ENCODE measurements at regions of chr12 and their contacts with region 1.

Region 1: GRCh38 chr12:111298582-111299436 is 70.1 kb downstream of the PHETA1 start:
- DNase-seq: peak; percentile 48 to 82
- H3K4me3 ChIP-seq: no peak overlapping the region
- H3K4me1 ChIP-seq: no peaks in the 10 kb centered on the region
- H3K27me3 ChIP-seq: no peaks in the 10 kb centered on the region

Region 2: DNA sequence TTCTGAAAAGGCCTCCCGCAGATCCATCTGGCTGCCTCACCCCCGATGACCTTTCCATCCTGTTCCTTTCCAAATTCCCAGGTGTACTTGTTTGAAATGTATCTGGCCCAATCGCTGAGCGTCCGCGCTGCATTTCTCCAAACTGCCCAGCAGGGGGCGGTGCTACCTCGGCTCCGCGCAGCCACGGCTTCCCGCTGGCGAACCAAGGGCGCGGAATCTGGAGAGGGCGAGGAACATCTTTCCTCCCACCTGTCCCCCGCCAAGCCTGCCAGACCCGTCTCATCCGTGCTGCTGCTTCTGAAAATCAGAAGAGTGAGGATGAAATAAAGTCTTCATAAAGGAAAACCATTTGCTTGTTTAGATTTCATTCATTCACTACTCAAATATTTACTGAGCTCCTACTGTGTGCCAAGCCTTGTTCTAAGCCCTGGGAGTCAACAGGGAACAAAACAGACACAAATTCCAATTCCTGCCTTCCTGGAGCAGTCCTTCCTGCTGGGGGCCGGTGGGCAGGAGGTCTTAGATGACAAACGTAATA is 361.6 kb before region 1 on chr12:
- in situ Hi-C with region 1: loop called (anchors 10 kb)
- DNase-seq: peak; percentile 50 to 80
- H3K4me3 ChIP-seq: no peak overlapping the region
- H3K4me1 ChIP-seq: no peaks in the 10 kb centered on the region
- H3K27me3 ChIP-seq: no peaks in the 10 kb centered on the region

Region 3: DNA sequence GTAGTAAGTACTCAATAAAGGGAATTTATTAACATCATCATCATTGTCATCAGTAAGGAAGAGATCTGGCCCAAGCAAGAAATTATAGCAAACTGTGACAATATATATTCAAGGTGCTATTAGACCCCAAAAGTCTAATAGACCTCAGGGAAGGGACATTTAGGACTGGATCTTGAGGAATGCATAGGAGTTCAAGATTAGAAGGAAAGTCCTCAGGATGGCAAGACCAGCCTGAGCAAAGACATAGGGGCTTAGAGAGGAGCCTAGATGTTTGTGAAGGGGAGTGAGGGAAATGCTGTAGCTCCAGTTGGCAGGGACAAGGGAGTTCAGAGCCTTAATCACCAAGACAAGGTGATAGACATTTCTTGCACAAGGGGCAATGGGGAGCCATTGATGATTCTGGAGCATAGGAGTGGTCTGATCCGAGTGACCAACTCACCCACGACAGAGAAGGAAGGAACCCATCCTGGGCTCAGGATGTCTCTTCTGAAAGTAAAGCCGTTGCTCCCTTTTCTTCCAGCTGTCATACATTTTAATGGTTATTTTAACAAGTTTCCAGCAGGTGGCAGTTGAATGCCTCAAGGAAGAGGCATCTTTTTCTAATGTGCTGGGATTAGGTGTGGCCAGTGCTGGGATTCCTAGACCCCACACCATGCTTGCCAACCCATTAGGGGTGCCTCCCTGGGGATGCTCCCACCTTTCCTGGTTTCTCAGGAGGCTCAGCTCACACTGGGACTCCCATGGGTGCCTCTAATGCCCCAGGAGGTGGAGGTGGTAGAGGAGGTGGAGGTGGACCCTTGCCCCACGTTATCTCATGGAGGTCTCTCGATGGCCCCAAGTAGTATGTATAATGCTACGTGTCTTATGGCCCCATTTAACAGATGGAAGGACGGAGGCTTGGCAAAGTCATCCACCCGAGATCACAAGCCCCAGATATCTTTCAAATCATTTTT is 32.3 kb after region 1 on chr12:
- in situ Hi-C with region 1: no loop called
- DNase-seq: peak; percentile 41 to 54
- H3K4me3 ChIP-seq: no peak overlapping the region
- H3K4me1 ChIP-seq: no peaks in the 10 kb centered on the region
- H3K27me3 ChIP-seq: no peaks in the 10 kb centered on the region

Region 4: DNA sequence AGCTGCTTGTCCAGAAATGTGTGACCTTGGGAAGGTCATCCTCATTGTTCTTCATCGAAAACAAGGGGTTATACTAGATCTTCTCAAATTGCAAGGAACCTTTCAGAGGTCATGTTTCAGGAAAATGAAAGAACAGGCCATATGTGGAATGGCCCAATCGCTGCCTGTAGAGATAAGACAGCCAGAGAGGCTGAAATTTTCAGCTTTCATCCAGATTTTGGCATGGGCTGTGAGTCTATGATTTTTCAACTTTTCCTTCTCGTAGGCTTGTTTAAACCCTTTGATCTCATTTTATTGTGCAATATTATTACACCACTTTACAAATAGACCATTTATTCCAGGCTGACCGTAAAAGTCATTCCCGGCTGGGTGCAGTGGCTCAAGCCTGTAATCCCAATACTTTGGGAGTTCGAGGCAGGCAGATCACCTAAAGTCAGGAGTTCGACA is 317.4 kb after region 1 on chr12:
- in situ Hi-C with region 1: no loop called
- DNase-seq: no peak
- H3K4me3 ChIP-seq: no peak overlapping the region
- H3K4me1 ChIP-seq: no peaks in the 10 kb centered on the region
- H3K27me3 ChIP-seq: no peaks in the 10 kb centered on the region